CD8-positive, alpha-beta T cell (primary cell): ENCODE measurements at regions of chr14 and their contacts with region 1.

Region 1: DNA sequence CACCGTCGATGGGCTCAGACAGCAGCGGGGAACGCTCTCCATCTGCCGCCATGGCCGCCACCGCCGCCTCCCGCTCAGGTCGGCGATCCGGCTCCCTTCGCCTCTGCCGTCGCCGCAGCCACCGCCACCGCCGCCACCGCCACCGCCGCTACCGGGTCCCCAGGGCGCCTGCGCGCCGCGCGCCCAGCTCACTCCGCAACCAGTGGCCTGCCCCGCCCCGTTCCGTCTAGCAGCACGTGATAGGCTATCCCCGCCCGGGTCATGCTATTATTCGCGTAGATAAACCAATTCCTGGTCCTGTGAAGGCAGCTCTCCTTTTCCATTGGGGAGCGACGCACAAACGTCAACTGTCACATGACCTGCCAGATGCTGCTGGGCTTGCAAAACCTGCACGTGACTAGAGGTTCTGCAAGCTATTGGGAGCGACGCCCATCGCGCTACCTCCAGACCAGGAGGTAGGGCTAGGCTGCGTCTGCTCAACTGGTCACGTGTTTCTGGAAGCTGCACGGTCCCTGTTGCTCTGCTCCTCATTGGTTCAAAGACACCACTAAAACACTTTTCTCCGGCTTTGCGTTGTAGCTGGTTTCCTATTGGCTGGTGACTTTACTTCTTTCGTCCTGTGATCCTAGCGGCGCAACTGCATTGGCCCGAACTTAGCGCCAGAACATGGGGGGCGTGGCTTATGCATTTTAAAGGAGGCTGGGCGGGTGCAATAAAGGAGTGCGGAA is at the start of gene PIP4P1:
- DNase-seq: peak; percentile 95 to 100 (median 97)
- ATAC-seq: peak; percentile 85
- H3K4me3 ChIP-seq: peak within 1 kb of the TSS; percentile 72 to 85
- H3K4me3 Mint-ChIP-seq: peak within 1 kb of the TSS; percentile 92
- H3K27ac ChIP-seq: peak within 1 kb of the TSS; percentile 84 to 95
- H3K27ac Mint-ChIP-seq: peak within 1 kb of the TSS; percentile 96
- H3K4me1 ChIP-seq: peaks cover 26% of the 10 kb centered on the region
- H3K4me1 Mint-ChIP-seq: peaks cover 30% of the 10 kb centered on the region
- H3K27me3 ChIP-seq: no peaks in the 10 kb centered on the region
- H3K27me3 Mint-ChIP-seq: no peaks in the 10 kb centered on the region
- CTCF ChIP-seq: no peak
- total RNA-seq, gene PIP4P1: 87.7 to 105 TPM

Region 2: DNA sequence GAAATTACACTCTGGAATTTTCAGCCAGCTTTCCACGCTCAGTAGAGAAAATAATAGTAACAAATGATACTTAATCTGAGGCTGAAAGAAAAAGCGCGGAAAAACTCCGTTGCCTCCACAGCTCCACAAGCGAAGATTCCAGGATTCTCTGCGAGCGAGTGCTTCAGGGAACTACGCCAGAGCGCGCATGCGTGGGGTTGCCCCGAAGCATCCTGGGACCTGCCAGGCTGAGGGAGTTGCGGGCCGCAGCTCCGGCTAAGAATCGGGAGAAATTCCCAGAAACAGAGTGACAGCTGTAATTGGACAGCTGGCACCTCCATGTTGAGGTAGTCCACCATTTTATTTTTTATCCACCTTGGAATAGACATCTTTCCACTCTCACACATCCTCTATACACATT is 143.7 kb before region 1 on chr14:
- CTCF ChIA-PET with region 1: no interaction called
- POLR2A ChIA-PET with region 1: no interaction called
- intact Hi-C with region 1: no loop called
- DNase-seq: no peak
- ATAC-seq: no peak
- H3K4me3 ChIP-seq: no peak overlapping the region
- H3K4me3 Mint-ChIP-seq: no peak overlapping the region
- H3K27ac ChIP-seq: no peak overlapping the region
- H3K27ac Mint-ChIP-seq: no peak overlapping the region
- H3K4me1 ChIP-seq: no peaks in the 10 kb centered on the region
- H3K4me1 Mint-ChIP-seq: no peaks in the 10 kb centered on the region
- H3K27me3 ChIP-seq: no peaks in the 10 kb centered on the region
- H3K27me3 Mint-ChIP-seq: no peaks in the 10 kb centered on the region
- CTCF ChIP-seq: no peak

Region 3: DNA sequence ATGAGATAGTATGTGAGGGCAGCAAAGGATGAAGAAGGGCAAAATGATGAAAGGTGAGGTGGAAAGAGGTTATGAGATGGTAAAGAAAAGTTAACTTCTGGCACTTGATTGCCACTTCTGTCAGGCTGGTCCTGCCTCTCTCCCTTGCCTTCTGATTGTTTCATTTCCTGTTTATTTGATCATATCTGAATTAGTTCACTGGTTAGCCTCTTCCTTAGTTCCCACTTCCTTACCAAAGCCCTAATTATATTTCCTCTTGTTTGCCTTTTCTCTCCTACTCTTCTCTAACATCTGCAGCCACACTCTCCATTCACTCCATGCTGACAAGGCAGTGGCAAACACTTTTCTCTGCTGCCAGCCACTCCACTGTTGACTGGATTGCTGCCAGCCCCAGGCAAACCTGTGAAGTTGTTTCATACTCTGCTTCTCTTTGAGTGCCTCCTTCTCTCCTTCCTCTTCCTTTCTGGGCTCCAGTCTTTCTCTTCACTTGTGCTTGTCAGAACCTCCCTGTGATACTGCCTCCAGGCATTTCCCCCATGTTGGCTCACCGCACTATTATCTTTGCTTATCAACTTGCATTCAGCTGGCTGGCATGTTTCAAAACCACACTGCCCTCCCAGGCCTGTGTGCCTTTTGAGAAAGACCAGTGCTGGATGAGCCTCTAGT is 15.9 kb after region 1 on chr14:
- CTCF ChIA-PET with region 1: no interaction called
- POLR2A ChIA-PET with region 1: interaction called, 31 read pairs
- intact Hi-C with region 1: loop called in 1 of 2 experiments (anchors 1 kb)
- DNase-seq: peak in 8 of 9 experiments; percentile 16 to 71 (median 44)
- ATAC-seq: peak; percentile 75
- H3K4me3 ChIP-seq: peak overlapping the region in 1 of 2 experiments; percentile 1
- H3K4me3 Mint-ChIP-seq: peak overlapping the region; percentile 65
- H3K27ac ChIP-seq: peak overlapping the region; percentile 41 to 79
- H3K27ac Mint-ChIP-seq: peak overlapping the region; percentile 92
- H3K4me1 ChIP-seq: peaks cover 66% of the 10 kb centered on the region
- H3K4me1 Mint-ChIP-seq: peaks cover 86% of the 10 kb centered on the region
- H3K27me3 ChIP-seq: no peaks in the 10 kb centered on the region
- H3K27me3 Mint-ChIP-seq: no peaks in the 10 kb centered on the region
- CTCF ChIP-seq: no peak

Region 4: GRCh38 chr14:20989572-20990551 is 528.4 kb after region 1 on chr14 and contains the start of gene METTL17:
- CTCF ChIA-PET with region 1: no interaction called
- POLR2A ChIA-PET with region 1: no interaction called
- intact Hi-C with region 1: loop called in 1 of 2 experiments (anchors 5 kb)
- DNase-seq: peak; percentile 65 to 94 (median 85)
- ATAC-seq: peak; percentile 92
- H3K4me3 ChIP-seq: peak within 1 kb of the TSS; percentile 92 to 96
- H3K4me3 Mint-ChIP-seq: peak within 1 kb of the TSS; percentile 95
- H3K27ac ChIP-seq: peak within 1 kb of the TSS; percentile 65 to 73
- H3K27ac Mint-ChIP-seq: peak within 1 kb of the TSS; percentile 94
- H3K4me1 ChIP-seq: peaks cover 18% of the 10 kb centered on the region
- H3K4me1 Mint-ChIP-seq: peaks cover 28% of the 10 kb centered on the region
- H3K27me3 ChIP-seq: no peaks in the 10 kb centered on the region
- H3K27me3 Mint-ChIP-seq: no peaks in the 10 kb centered on the region
- CTCF ChIP-seq: peak; percentile 28
- total RNA-seq, gene METTL17: 82.3 to 88.8 TPM